Activated B cell treated with CpG ODN at 0.5 μM for 24 hours (primary cell): ENCODE measurements at regions of chr13 and their contacts with region 1.

Region 1: GRCh38 chr13:45162821-45163220 is 38.0 kb downstream of the KCTD4 start:
- DNase-seq: no peak
- ATAC-seq: no peak
- H3K4me3 Mint-ChIP-seq: no peak overlapping the region
- H3K27ac Mint-ChIP-seq: no peak overlapping the region
- H3K4me1 Mint-ChIP-seq: peaks cover 8% of the 10 kb centered on the region
- H3K27me3 Mint-ChIP-seq: no peaks in the 10 kb centered on the region
- CTCF ChIP-seq: no peak

Region 2: GRCh38 chr13:45063261-45063860 is 99.5 kb before region 1 on chr13:
- CTCF ChIA-PET with region 1: no interaction called
- POLR2A ChIA-PET with region 1: interaction called, 10 read pairs
- intact Hi-C with region 1: no loop called
- DNase-seq: no peak
- ATAC-seq: no peak
- H3K4me3 Mint-ChIP-seq: no peak overlapping the region
- H3K27ac Mint-ChIP-seq: no peak overlapping the region
- H3K4me1 Mint-ChIP-seq: peaks cover 3% of the 10 kb centered on the region
- H3K27me3 Mint-ChIP-seq: no peaks in the 10 kb centered on the region
- CTCF ChIP-seq: no peak

Region 3: DNA sequence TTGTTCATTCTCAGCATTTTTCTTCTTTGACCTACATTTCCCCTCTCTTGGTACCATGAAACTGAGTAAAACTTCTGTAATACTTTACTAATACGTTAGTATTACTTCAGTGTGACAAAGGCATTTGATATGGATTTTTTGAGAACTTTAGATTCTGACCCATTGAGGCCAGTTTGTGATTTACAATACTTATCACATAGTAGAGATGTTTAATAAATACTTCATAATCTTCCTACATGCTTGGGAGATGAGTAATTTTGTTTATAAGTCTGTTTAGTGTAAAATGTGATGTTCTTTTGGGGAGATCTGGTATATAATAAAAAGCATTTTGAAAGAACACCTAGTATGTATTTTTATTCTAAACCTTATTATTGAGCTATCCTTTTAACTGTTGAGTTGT is 12.9 kb before region 1 on chr13:
- CTCF ChIA-PET with region 1: no interaction called
- POLR2A ChIA-PET with region 1: no interaction called
- intact Hi-C with region 1: loop called (anchors 2 kb)
- DNase-seq: no peak
- ATAC-seq: no peak
- H3K4me3 Mint-ChIP-seq: no peak overlapping the region
- H3K27ac Mint-ChIP-seq: no peak overlapping the region
- H3K4me1 Mint-ChIP-seq: peaks cover 2% of the 10 kb centered on the region
- H3K27me3 Mint-ChIP-seq: no peaks in the 10 kb centered on the region
- CTCF ChIP-seq: no peak